HAP-1 (cell line): ENCODE measurements at regions of chr9 and their contacts with region 1.

Region 1: GRCh38 chr9:77743386-77743785 is 95.3 kb upstream of the GNA14 start:
- DNase-seq: no peak
- H3K4me3 ChIP-seq: no peak overlapping the region
- H3K4me1 ChIP-seq: peaks cover 4% of the 10 kb centered on the region; the same call in 1 of the 2 replicates
- H3K27me3 ChIP-seq: no peaks in the 10 kb centered on the region

Region 2: DNA sequence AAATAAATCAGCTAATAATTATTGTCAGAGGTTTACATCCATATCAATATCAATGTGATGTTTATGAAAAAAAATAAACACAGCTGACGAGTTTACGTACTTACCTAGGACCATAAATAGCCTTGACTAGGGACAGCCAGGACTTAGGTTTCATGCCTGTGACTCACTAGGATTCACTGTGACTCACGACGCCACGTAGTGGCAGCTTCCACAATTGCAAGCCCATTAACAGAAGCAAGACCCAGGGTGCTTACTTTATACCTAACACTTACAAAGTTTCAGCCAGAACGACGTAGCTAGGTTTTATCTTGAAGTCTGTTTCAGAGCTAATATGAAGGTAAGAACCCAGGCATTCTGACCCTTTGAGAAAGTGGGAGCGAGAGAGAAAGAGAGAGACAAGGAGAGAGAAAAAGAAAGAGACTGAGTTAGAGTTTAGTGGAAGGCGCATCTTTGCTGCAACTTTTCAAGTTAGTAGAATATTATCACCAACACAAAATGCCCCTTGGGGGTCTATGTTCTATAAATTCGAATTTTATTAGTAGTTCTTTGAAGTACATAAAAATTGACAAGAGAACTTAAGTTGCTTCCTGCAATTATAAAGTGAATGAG is 286.5 kb before region 1 on chr9:
- in situ Hi-C with region 1: loop called (anchors 10 kb)
- DNase-seq: peak; percentile 67 to 89
- H3K4me3 ChIP-seq: no peak overlapping the region
- H3K4me1 ChIP-seq: no peaks in the 10 kb centered on the region
- H3K27me3 ChIP-seq: no peaks in the 10 kb centered on the region

Region 3: DNA sequence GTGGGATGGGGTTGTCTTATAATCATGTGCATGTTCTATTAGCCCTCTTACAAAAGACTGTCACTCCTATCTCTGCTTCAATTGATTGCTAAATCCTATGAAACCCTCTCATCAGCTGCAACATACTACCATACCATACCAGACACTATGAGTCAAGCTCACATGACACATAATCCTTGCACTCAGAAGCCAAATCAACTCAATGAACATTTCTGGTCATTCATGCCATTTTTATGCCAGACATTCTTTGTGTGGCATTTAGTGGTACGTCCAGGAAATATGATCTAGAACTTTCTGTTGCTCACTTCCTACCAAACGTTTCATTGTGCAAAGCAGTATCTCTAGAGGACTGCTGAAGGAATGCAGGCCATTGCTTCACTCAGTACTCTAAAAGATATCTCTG is 63.9 kb after region 1 on chr9:
- in situ Hi-C with region 1: no loop called
- DNase-seq: no peak
- H3K4me3 ChIP-seq: no peak overlapping the region
- H3K4me1 ChIP-seq: peaks cover 9% of the 10 kb centered on the region; the same call in 1 of the 2 replicates
- H3K27me3 ChIP-seq: no peaks in the 10 kb centered on the region